Heart left ventricle (tissue), 16 donors: ENCODE measurements at regions of chr2 and their contacts with region 1.

Region 1: GRCh38 chr2:28981016-28981441 is at the start of gene TOGARAM2:
- DNase-seq: peak in 1 of 5 donors; percentile 54
- ATAC-seq: peak; percentile 12 to 67 (median 46)
- H3K4me3 ChIP-seq: no peak within 1 kb of the TSS
- H3K27ac ChIP-seq: peak within 1 kb of the TSS in 10 of 12 donors; percentile 14 to 82 (median 60)
- H3K4me1 ChIP-seq: peaks cover 0 to 39% (median 7%) of the 10 kb centered on the region in 12 donors
- H3K27me3 ChIP-seq: no peaks in the 10 kb centered on the region
- CTCF ChIP-seq: no peak
- POLR2A ChIP-seq: no peak
- total RNA-seq, gene TOGARAM2: 0.24 to 23.5 (median 6.2) TPM

Region 2: DNA sequence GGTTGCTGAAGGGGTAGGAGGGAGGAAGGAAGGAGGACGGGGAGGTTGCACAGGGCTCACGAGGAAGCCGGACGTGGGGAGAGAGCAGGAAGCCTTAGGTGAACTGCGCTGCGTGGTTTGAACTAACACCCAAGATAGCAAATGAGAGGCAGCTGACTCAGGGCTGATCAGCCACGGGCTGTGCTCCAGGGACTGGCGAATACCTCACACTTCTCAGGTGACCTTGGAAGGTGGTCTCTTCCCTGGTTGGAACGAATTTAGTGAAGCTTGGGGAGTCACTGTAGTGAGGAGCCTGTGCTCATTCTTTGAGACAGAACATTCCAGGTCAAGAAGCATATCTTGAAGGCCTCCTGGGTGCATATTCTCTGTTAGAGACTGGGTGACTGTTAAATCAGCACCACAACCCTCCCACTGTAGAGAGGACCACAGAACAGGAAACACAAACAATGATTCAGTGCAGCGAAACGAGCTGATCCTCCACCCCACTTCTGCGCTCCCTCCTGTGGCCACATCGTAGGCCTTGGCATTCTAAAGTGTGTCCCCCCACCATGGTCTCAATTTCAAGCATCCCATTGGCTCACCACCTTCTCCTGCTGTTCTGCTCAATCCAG is 33.9 kb after region 1 on chr2:
- intact Hi-C with region 1: loop called in 3 of 10 experiments (anchors 2 to 5 kb)
- DNase-seq: peak; percentile 57 to 81 (median 75)
- ATAC-seq: peak; percentile 4 to 50 (median 14)
- H3K4me3 ChIP-seq: peak overlapping the region in 10 of 12 donors; percentile 3 to 47 (median 30)
- H3K27ac ChIP-seq: peak overlapping the region; percentile 79 to 98 (median 88)
- H3K4me1 ChIP-seq: peaks cover 6 to 83% (median 64%) of the 10 kb centered on the region in 12 donors
- H3K27me3 ChIP-seq: no peaks in the 10 kb centered on the region
- CTCF ChIP-seq: peak in 1 of 12 donors; percentile 7
- POLR2A ChIP-seq: no peak

Region 3: DNA sequence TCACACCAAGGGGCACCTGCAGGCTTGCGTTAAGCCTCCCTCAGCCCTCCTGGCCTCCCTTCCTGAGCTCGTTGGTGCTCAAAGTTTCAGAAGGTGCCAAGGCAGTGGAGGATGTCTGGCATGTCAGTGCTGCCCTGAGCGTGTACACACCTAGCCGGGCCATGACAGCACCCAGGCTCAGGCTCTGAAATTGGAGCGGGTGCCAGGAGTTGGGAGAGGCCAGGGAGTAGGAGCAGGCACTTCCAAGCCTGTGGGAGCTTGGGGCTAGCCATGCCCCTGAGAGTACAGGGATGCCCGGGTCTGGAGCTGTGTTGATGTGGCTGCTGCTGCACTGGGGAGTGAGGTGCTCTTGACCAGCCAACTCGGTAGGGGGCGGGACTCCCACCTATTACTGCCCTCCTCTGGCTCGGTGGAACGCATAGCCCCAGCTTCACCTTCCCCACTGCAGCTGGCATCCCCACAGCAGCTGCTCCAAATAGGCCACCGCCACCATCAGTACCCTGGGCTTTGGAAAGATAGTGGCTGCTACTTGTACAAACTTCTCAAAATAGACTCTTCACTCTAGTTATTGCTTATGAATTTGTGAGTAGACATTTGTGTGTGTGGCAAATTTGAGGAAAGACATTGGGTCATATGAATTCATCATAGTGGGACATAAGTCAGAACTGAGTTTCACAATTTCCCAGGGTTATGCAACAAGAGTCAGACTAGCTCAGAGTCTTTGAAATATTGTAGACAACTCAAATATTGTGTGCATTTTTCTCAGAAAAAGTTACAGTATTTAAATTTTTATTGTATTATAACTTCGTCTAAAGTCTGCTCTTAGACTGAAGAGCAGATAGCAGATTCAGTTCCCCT is 100.1 kb after region 1 on chr2:
- intact Hi-C with region 1: no loop called
- DNase-seq: no peak
- ATAC-seq: no peak
- H3K4me3 ChIP-seq: no peak overlapping the region
- H3K27ac ChIP-seq: no peak overlapping the region
- H3K4me1 ChIP-seq: peaks cover 0 to 3% (median 0%) of the 10 kb centered on the region in 12 donors
- H3K27me3 ChIP-seq: no peaks in the 10 kb centered on the region
- CTCF ChIP-seq: no peak
- POLR2A ChIP-seq: no peak